ENCODE measurements at regions of chr5 and their contacts with region 1.

Region 1: GRCh38 chr5:149656576-149657182 is 73.4 kb upstream of the PPARGC1B start:
- DNase-seq: peak in 1 of 7 donors; percentile 60
- H3K4me3 ChIP-seq: no peak overlapping the region
- H3K27ac ChIP-seq: no peak overlapping the region
- H3K4me1 ChIP-seq: no peaks in the 10 kb centered on the region
- H3K27me3 ChIP-seq: no peaks in the 10 kb centered on the region
- CTCF ChIP-seq: peak; percentile 13 to 59 (median 46)
- POLR2A ChIP-seq: no peak

Region 2: GRCh38 chr5:149251546-149251945 is 405.1 kb before region 1 on chr5:
- intact Hi-C with region 1: no loop called
- DNase-seq: no peak
- H3K4me3 ChIP-seq: no peak overlapping the region
- H3K27ac ChIP-seq: no peak overlapping the region
- H3K4me1 ChIP-seq: no peaks in the 10 kb centered on the region
- H3K27me3 ChIP-seq: no peaks in the 10 kb centered on the region
- CTCF ChIP-seq: no peak
- POLR2A ChIP-seq: no peak

Region 3: DNA sequence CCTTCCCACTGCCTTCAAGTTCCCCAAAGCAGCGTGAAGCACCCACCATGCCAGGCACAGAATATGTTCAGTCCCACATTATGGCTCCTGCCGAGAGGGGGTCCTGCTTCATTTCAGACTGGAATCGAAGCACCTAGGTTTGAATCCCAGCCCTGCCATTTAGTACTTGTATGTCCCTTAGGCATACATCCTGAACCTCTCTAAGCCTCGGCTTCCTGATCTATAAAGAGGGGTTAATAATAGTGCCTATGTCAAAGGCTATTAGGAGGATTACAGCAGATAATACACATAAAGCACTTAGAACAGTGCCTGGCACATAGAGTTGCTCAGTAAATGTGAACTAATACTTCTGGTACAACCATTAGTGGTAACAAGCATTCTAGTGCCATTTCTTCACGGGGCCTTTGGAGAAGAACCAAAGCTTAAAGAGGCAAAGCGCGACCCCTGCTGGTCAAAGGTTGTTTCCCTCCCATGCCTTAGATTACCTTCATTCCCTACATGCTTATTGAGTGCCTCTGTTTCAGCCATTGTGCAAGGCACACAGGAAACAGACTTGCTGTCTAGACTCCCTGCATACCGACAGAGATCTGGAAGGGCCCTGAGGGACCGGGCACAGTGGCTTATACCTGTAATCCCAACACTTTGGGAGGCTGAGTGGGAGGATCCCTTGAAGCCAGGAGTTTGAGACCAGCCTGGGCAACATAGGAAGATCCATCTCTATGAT is 171.6 kb after region 1 on chr5:
- intact Hi-C with region 1: loop called in 1 of 2 experiments (anchors 5 kb)
- DNase-seq: peak; percentile 82 to 97 (median 92)
- H3K4me3 ChIP-seq: no peak overlapping the region
- H3K27ac ChIP-seq: no peak overlapping the region
- H3K4me1 ChIP-seq: no peaks in the 10 kb centered on the region
- H3K27me3 ChIP-seq: no peaks in the 10 kb centered on the region
- CTCF ChIP-seq: peak; percentile 88 to 95 (median 94)
- POLR2A ChIP-seq: no peak